Activated T-helper 1 cell treated with anti-CD3 and anti-CD28 coated beads, Interleukin-12 subunit alpha, Interleukin-12 subunit beta, Interleukin-2, Interleukin-4 antibody, amounts not matched to agents 30 ng/mL and 10 ng/mL and 1 ng/mL, durations not matched to agents 14 hours and 24 hours and 36 hours (primary cell): ENCODE measurements at regions of chr1 and their contacts with region 1.

Region 1: DNA sequence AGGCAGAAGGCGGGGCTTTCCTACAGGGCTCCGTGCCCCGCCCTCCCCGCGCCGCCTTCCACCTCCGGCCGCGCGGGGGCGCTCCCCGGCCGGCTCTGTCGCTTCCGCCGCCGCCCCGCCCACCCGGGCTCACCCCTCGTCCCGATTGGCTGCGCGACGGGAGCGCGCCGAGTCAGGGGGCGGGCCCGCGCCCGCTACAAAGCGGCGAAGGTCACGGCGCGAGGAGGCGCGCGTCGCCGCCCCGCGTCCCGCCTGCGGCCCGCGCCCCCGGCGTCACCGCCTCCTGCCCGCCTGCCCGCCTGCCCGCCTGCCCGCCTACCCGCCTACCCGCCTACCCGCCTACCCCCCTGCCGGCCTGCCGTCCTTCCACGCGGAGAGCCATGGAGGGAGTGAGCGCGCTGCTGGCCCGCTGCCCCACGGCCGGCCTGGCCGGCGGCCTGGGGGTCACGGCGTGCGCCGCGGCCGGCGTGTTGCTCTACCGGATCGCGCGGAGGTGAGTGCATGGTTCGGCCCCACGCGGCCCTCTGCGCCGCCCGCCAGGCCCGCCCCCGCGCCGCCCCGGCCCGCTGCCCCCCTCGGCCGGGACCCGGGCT is at the start of gene TMEM201:
- DNase-seq: peak; percentile 94
- H3K4me3 Mint-ChIP-seq: peak within 1 kb of the TSS; percentile 72
- H3K27ac Mint-ChIP-seq: peak within 1 kb of the TSS; percentile 48
- H3K4me1 Mint-ChIP-seq: peaks cover 30% of the 10 kb centered on the region
- H3K27me3 Mint-ChIP-seq: no peaks in the 10 kb centered on the region
- total RNA-seq, gene TMEM201: 36.7 and 38.7 TPM in 2 replicates

Region 2: DNA sequence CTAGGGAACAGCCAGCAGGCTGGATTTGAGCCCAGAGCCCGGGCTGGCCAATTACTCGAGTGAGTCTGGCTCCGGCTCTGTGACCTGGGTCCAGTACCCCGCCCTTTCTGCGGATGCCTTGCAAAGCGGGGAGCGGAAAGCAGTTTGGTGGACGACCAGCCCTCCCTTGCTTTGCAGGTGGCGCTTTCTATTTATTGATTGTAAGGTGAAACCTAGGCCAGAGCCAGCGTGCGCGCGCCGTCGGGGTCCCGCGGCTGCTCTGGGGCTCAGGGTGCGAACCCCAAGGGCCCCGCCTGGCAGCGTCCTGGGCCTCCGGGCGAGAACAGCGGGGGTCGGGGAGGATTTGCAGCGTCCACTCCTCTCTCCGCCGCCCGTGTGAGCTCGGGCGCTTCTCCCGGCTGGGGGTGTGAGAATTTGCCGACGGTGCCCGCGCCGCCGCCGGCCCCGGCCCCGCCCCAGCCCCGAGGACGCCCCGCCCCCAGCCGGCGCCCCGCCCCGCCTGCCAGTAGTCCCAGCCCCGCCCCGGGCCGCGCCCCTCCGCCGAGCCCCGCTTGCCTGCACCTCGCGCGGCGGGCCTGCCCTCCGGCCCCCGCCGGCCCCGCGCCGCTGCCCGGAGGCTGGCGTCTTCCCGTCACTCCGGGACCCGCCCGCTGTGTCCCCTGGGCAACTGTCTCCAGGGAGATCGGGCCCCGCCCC is 100.5 kb after region 1 on chr1:
- intact Hi-C with region 1: loop called (anchors 1 kb)
- DNase-seq: peak; percentile 71
- H3K4me3 Mint-ChIP-seq: peak overlapping the region; percentile 75
- H3K27ac Mint-ChIP-seq: peak overlapping the region; percentile 70
- H3K4me1 Mint-ChIP-seq: peaks cover 59% of the 10 kb centered on the region
- H3K27me3 Mint-ChIP-seq: no peaks in the 10 kb centered on the region

Region 3: DNA sequence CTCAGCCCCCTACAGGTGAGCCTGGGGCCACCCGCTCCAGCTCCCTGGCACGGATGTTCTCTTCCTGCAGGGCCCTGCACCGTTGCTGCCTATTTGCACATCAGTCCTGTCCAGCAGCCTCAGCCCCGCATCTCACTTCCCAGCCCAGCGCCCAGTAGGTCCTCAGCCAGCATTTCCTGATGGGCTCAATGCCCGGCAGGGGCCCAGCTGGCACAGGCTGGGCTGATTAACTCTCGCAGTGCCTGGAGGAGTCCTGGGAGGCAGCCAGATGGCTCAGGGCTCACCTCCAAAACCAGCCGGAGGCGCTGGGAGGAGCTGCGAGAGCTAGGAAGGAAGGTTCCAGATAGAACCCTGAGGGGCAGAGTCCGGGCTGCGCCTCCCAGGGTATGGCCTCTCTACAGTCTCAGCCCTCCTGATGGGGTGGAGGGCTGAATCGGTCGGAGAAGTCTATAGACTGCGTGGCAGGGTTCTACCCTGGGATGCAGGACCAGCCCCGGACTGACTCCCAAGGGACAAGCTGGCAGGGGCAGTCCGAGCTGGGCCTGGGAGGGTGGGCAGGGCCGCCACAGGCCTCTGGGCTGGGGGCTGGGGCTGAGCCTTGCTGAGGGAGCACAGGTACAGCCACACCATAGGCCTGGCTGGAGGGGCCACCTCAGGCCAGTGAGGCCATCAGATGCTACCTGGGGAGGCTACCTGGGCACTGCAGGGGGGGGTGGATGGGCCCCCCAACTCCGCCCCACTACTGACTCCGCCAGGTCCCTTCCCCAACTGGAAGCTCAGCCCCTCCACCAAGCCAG is 254.3 kb after region 1 on chr1:
- intact Hi-C with region 1: no loop called
- DNase-seq: no peak
- H3K4me3 Mint-ChIP-seq: no peak overlapping the region
- H3K27ac Mint-ChIP-seq: no peak overlapping the region
- H3K4me1 Mint-ChIP-seq: no peaks in the 10 kb centered on the region
- H3K27me3 Mint-ChIP-seq: peaks cover 13% of the 10 kb centered on the region